ENCODE measurements at regions of chr6 and their contacts with region 1.

Region 1: GRCh38 chr6:2976571-2977085 is 5.3 kb upstream of the SERPINB6 start:
- DNase-seq: peak; percentile 71
- H3K4me3 ChIP-seq: no peak overlapping the region
- H3K27ac ChIP-seq: peak overlapping the region; percentile 21
- H3K4me1 ChIP-seq: peaks cover 27% of the 10 kb centered on the region
- H3K27me3 ChIP-seq: no peaks in the 10 kb centered on the region
- CTCF ChIP-seq: no peak
- POLR2A ChIP-seq: no peak

Region 2: DNA sequence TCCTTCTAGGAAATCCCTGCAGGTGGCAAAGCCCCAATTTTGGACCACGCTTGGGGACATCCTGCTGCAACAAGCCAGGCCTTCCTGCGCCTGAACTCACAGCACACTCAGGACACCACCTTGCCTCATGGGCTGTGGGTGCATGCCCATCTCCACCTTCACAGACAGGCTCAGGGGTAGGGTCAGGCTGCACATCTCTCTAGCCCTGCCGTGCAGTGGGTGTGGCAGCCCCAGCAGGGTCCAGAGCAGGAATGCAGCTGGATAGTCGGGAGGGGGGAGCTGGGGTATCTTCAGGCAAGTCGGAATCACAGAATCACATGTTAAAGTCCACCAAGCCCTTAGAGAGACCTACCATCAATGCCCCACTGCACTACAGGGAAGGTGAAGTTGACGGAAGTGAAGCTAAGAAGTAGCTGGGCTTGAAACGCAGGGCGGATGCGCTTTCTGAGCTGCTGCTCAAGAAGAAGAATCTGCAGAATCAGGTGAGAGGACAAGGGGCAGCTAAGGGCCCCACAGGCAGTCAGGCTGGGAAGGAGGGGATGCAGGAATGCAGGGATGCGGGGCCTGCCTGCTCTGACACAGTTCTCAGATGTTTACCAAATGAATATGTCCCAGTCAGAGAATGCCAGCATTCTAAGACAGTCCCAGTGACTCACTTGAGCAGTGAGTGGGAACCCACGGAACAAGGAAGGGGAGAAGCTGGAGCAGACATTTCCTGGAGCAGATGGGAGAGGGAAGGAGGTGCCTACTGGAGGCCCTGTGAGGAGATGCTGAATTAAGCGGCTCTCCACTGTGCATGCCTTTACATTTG is 16.5 kb before region 1 on chr6:
- CTCF ChIA-PET with region 1: interaction called, 4 read pairs
- POLR2A ChIA-PET with region 1: no interaction called
- dilution Hi-C with region 1: no loop called
- intact Hi-C with region 1: loop called (anchors 2 kb)
- DNase-seq: peak; percentile 76
- H3K4me3 ChIP-seq: no peak overlapping the region
- H3K27ac ChIP-seq: peak overlapping the region; percentile 28
- H3K4me1 ChIP-seq: peaks cover 18% of the 10 kb centered on the region
- H3K27me3 ChIP-seq: no peaks in the 10 kb centered on the region
- CTCF ChIP-seq: no peak
- POLR2A ChIP-seq: no peak

Region 3: GRCh38 chr6:2966347-2966746 is 10.3 kb before region 1 on chr6:
- CTCF ChIA-PET with region 1: interaction called, 11 read pairs
- POLR2A ChIA-PET with region 1: no interaction called
- dilution Hi-C with region 1: no loop called
- intact Hi-C with region 1: loop called (anchors 1 kb)
- DNase-seq: no peak
- H3K4me3 ChIP-seq: no peak overlapping the region
- H3K27ac ChIP-seq: no peak overlapping the region
- H3K4me1 ChIP-seq: peaks cover 7% of the 10 kb centered on the region
- H3K27me3 ChIP-seq: no peaks in the 10 kb centered on the region
- CTCF ChIP-seq: no peak
- POLR2A ChIP-seq: no peak